GM23248 (cell line): ENCODE measurements at regions of chr7 and their contacts with region 1.

Region 1: DNA sequence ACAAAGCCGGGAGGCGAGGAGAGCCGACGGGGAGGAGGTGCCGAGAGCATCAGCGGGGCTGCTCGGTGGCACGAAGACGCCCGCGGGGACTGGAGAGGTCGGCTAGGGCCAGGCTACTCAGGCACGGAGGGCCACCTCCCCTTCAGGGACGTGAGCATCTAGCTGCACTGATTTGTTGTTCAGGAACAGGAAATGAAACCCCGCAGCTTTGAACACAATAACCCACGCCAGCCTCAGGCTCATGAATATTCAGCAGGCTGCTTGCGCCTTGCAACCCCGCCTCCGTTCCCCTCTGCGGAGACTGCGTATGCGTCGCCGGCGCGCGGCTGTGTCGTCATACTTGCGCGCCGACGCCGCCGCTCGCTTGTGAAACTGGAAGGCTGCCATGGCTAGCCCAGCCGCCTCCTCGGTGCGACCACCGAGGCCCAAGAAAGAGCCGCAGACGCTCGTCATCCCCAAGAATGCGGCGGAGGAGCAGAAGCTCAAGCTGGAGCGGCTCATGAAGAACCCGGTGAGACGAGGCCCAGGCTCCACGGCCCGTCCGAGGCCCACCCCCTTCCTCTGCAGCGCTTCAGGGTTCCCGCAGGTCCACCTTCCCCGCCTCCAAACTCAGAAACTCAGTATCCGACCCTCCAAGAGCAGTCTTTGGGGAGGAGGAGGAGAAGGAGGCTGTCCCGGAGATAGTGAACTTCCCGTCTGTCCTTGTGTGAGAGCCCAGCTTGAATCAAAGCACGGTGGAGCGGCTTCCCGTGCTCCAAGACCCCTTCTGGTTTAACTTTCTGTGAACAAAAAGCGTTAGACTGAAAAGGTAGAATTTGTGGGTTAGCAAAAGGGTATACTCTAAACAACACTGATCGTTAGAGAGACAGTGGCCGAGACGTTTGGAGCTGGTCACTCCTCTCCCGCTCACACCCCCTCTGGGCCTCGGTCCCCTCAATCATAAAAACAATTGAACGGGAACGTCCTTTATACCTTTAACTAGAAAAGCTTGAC is at the start of gene PRKRIP1:
- DNase-seq: peak; percentile 95
- H3K4me3 ChIP-seq: peak within 1 kb of the TSS; percentile 82
- H3K27ac ChIP-seq: peak within 1 kb of the TSS; percentile 87
- H3K4me1 ChIP-seq: peaks cover 5% of the 10 kb centered on the region; the same call in 1 of the 2 replicates
- H3K27me3 ChIP-seq: no peaks in the 10 kb centered on the region
- total RNA-seq, gene PRKRIP1: 14.8 and 17.3 TPM in 2 replicates

Region 2: DNA sequence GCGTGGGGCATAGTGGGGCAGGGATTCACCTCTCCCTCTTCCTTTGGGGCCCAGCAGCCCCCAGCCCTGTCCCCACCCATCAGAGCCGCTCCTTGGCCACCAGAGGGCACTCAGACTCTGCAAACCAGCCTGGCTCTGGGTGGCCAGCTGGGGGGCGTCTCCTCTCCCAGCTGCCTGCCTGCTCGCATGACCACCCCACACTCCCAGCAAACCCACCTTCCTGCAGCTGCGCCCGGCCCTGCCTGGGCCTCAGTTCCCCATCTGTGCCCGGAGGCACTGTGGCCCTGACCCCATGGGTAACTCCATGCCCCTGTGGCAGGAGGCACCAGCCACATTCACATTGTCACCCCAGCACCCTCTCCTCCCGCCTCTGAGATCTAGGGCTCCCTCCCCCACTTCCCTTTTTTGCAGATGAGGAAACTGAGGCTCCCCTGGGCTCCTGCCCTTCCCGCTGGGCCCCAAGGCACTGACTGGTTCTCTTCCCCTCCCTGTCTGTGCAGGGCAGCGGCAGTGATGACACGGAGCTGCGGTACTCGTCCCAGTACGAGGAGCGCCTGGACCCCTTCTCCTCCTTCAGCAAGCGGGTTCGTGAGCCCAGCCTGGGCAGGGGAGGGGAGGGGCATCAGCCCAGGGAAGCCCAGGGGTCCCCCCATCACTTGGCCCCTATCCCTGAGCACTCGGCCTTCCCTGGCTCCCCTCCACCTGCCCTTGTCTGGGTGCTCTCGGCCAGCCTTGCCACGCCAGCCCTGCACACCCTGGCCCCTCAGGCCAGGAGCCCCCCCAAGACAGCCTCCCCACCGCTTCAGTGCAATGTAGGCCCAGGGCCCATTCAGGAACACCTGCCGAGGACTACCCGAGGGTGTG is 116.6 kb before region 1 on chr7:
- in situ Hi-C with region 1: loop called (anchors 10 kb)
- DNase-seq: peak; percentile 57
- H3K4me3 ChIP-seq: no peak overlapping the region
- H3K27ac ChIP-seq: no peak overlapping the region
- H3K4me1 ChIP-seq: no peaks in the 10 kb centered on the region
- H3K27me3 ChIP-seq: no peaks in the 10 kb centered on the region